GM12878 (cell line): ENCODE measurements at regions of chr1 and their contacts with region 1.

Region 1: GRCh38 chr1:182084487-182085316 is 23.2 kb upstream of the ZNF648 start:
- DNase-seq: no peak
- ATAC-seq: peak; percentile 94
- H3K4me3 ChIP-seq: no peak overlapping the region
- H3K27ac ChIP-seq: no peak overlapping the region
- H3K4me1 ChIP-seq: no peaks in the 10 kb centered on the region
- H3K27me3 ChIP-seq: no peaks in the 10 kb centered on the region
- CTCF ChIP-seq: peak; percentile 67 to 75 (median 74)
- EP300 ChIP-seq: no peak
- POLR2A ChIP-seq: no peak
- RAD21 ChIP-seq: peak; percentile 89

Region 2: GRCh38 chr1:181369416-181369815 is 715.3 kb before region 1 on chr1:
- CTCF ChIA-PET with region 1: no interaction called
- POLR2A ChIA-PET with region 1: no interaction called
- RAD21 ChIA-PET with region 1: no interaction called
- SMC1A ChIA-PET with region 1: no interaction called
- in situ Hi-C with region 1: no loop called
- intact Hi-C with region 1: no loop called
- DNase-seq: no peak
- ATAC-seq: no peak
- H3K4me3 ChIP-seq: no peak overlapping the region
- H3K27ac ChIP-seq: no peak overlapping the region
- H3K4me1 ChIP-seq: no peaks in the 10 kb centered on the region
- H3K27me3 ChIP-seq: no peaks in the 10 kb centered on the region; a peak in 1 of 4 replicates
- CTCF ChIP-seq: no peak
- EP300 ChIP-seq: no peak
- POLR2A ChIP-seq: no peak
- RAD21 ChIP-seq: no peak

Region 3: GRCh38 chr1:182069028-182069466 is 15.7 kb before region 1 on chr1:
- CTCF ChIA-PET with region 1: interaction called, 31 read pairs
- POLR2A ChIA-PET with region 1: no interaction called
- RAD21 ChIA-PET with region 1: interaction called, 4 read pairs
- SMC1A ChIA-PET with region 1: no interaction called
- in situ Hi-C with region 1: no loop called
- intact Hi-C with region 1: no loop called
- DNase-seq: no peak
- ATAC-seq: peak; percentile 81
- H3K4me3 ChIP-seq: no peak overlapping the region
- H3K27ac ChIP-seq: no peak overlapping the region
- H3K4me1 ChIP-seq: no peaks in the 10 kb centered on the region
- H3K27me3 ChIP-seq: peaks cover 0 to 2% of the 10 kb centered on the region in 2 experiments; a peak in 2 of 4 replicates
- CTCF ChIP-seq: peak; percentile 39 to 68 (median 44)
- EP300 ChIP-seq: no peak
- POLR2A ChIP-seq: no peak
- RAD21 ChIP-seq: no peak